ENCODE measurements at regions of chr4 and their contacts with region 1.

Region 1: DNA sequence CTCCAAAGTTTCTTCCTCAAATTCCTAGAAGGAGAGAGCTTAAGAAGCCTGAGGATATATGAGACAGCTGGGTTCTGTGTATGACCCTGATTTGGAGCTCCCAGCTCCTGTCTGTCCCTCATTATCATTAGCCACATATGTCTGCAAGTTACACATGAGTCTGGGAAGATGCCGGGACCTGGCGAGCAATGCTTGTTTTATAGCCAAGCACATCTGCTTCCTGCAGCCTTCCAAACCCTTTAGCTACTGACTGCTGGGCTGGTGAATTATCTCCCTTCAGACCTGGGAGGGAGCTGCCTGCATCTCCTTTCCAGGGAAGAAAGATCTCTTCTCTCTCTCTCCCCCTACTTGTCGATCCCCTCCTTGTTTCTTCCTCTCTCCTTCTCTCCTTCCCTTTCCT is 556.7 kb upstream of the BOD1L1 start:
- DNase-seq: no peak
- ATAC-seq: no peak

Region 2: DNA sequence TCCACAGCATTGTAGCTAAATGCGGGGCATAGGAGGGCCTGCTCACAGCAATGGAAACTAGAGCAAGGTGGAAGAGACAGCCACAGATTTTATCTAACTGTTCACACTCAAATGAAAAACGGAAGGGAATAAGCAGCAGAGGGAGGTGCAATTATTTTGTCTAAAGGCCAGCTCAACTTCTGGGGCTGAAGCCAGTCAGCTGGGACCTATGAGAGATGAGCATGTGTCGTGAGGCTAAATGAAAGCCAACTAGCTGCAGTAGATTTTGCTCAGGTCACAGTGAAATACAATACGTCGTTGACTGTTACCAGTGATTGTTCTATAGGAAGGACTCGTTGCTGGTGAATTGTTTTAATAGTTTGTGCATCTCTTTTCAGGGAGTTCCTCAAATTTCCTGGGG is 1805.2 kb after region 1 on chr4:
- intact Hi-C with region 1: loop called (anchors 5 kb)
- DNase-seq: no peak
- ATAC-seq: no peak

Measured in sciatic nerve (tissue), 2 donors.